ENCODE measurements at regions of chr1 and their contacts with region 1.

Region 1: DNA sequence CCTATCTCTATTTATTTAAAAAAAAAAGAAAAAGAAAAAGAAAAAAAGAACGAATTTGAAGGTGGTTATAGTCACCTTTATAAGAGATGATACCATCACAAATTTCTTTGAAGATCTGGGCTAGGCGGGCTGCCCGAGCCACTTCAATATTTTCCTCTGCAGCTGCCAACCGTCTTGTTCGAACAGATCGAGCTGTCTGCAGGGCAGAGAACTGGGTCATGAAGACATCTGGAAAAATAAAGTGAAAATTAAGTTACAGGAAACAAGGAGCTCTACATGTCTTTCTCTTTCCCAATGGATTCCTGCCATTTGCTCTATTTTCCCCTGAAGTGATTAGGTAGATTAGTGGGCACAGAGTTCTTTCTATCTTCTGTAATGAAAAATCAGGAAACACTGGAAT is 31.9 kb downstream of the RUSC1 start:
- DNase-seq: no peak
- H3K4me3 ChIP-seq: no peak overlapping the region
- H3K27ac ChIP-seq: no peak overlapping the region
- H3K4me1 ChIP-seq: no peaks in the 10 kb centered on the region
- H3K27me3 ChIP-seq: no peaks in the 10 kb centered on the region
- CTCF ChIP-seq: no peak
- EP300 ChIP-seq: no peak
- POLR2A ChIP-seq: no peak

Region 2: GRCh38 chr1:154474802-154475201 is 877.8 kb before region 1 on chr1:
- intact Hi-C with region 1: no loop called
- DNase-seq: no peak
- H3K4me3 ChIP-seq: no peak overlapping the region
- H3K27ac ChIP-seq: peak overlapping the region in 2 of 4 donors; percentile 45 to 56
- H3K4me1 ChIP-seq: peaks cover 10 to 33% (median 29%) of the 10 kb centered on the region in 4 donors
- H3K27me3 ChIP-seq: no peaks in the 10 kb centered on the region
- CTCF ChIP-seq: no peak
- EP300 ChIP-seq: no peak
- POLR2A ChIP-seq: no peak

Region 3: DNA sequence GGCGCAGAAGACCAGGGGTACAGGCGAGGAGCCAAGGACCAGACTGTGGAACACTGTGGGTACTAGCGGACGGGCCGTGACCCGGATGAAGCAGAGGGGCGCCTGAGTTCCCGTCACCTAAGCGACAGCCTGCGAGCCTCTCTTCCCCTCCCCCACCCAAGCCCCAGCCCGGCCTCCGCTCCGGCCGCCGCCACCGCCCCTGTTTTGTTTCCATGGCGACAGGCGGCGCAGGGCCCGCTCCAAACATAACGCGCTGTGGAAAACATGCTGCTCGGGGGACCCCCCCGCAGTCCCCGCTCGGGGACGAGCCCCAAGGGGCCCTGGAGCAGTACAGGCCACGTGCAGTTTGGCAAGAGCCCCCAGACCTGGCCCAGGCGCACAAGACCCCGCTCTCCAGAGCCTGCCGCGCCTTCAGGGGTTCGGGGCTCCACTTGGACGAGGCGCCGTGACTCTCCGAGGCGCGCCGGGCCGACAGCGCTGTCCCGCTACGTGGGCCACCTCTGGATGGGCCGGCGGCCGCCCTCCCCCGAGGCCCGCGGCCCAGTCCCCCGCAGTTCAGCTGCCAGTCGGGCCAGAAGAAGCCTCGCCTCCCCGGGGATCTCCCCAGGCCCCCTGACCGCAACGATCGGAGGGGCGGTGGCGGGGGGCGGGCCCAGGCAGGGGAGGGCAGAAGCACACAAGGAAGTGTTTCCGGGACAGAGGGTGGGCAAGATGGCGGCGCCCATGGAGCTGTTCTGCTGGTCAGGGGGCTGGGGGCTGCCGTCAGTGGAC is 143.9 kb before region 1 on chr1 and contains the start of gene MTX1:
- intact Hi-C with region 1: no loop called
- DNase-seq: peak; percentile 97
- H3K4me3 ChIP-seq: peak within 1 kb of the TSS; percentile 73 to 96 (median 87)
- H3K27ac ChIP-seq: peak within 1 kb of the TSS; percentile 98 to 100 (median 99)
- H3K4me1 ChIP-seq: peaks cover 23 to 63% (median 43%) of the 10 kb centered on the region in 4 donors
- H3K27me3 ChIP-seq: no peaks in the 10 kb centered on the region
- CTCF ChIP-seq: no peak
- EP300 ChIP-seq: no peak
- POLR2A ChIP-seq: peak; percentile 40
- total RNA-seq, gene MTX1: 34.1 to 52.8 (median 38.0) TPM

Region 4: DNA sequence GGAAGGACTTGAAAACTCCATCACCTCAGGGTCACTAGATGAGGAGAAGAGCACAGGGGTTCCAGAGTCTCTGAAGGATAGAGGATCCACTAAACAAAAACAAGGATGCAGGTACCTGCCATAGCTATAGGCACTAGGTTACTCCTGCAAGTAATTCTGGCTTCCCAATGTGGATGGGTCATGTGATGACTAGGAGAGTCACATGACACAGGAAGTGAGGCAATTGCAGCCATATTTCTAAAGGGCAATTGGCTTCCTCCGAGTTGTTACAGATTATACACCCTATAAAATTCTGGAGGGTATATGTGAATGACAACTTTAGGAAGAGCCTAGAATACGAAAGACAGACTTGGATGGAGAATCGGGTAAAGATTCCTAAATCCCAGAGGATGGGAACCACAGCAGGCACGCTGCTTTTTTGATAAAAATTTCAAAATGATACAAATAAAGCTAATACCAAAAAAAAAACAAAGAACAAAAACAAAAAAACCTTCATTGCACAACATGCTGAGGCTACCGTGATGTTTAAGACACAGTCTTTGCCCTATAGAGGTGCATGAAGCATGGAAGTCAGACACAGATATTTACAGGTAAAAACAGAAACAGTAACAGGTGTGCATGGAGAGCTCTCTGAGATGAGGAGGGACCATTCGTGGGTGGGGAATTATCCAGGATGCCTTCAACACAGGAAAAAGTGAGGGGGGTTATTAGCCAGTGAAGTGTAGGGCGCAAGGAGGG is 133.6 kb before region 1 on chr1:
- intact Hi-C with region 1: no loop called
- DNase-seq: no peak
- H3K4me3 ChIP-seq: peak overlapping the region; percentile 15 to 33 (median 28)
- H3K27ac ChIP-seq: no peak overlapping the region
- H3K4me1 ChIP-seq: peaks cover 5 to 14% (median 12%) of the 10 kb centered on the region in 4 donors
- H3K27me3 ChIP-seq: no peaks in the 10 kb centered on the region
- CTCF ChIP-seq: no peak
- EP300 ChIP-seq: no peak
- POLR2A ChIP-seq: no peak

Region 5: DNA sequence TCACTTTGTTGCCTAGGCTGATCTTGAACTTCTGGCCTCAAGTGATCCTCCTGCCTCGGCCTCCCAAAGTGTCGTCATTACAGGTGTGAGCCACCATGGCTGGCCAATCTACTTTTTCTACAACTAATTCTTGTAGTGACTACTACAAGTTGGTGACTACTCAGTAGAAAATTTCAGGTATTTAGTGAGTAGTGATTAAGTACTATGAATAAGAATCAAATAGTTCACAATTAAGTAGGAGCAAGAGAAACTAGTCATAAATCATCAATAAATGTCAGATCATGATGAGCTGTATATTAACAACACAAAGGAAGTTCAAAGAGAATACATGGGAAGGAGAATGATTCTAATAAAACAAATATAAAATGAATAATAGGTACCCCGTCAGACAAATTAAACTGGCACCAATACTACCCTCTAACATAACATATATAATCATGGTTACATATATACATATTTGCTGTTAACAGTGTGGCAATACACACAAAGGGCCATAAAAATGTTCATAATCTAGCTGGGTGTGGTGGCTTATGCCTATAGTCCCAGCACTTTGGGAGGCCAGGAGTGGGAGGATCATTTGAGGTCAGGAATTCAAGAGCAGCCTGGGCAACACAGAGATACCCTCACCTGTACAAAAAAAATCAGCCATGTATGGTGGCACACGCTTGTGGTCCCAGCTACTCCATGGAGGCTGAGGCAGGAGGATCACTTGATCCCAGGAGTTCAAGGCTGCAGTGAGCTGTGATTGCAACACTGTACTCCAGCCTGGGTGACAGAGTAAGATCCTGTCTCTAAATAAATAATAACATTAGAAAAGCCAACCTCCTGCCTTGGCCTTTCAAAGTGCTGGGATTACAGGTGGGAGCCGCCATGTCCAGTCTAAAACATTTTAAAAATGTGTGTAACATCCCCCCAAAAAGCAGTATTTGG is 316.9 kb after region 1 on chr1:
- intact Hi-C with region 1: loop called (anchors 10 kb)
- DNase-seq: no peak
- H3K4me3 ChIP-seq: no peak overlapping the region
- H3K27ac ChIP-seq: no peak overlapping the region
- H3K4me1 ChIP-seq: no peaks in the 10 kb centered on the region
- H3K27me3 ChIP-seq: no peaks in the 10 kb centered on the region
- CTCF ChIP-seq: no peak
- EP300 ChIP-seq: no peak
- POLR2A ChIP-seq: no peak

Measured in esophagus muscularis mucosa (tissue), 4 donors.